Head of caudate nucleus (tissue), 42 donors: ENCODE measurements at regions of chr15 and their contacts with region 1.

Region 1: GRCh38 chr15:68550481-68551295 is 28.1 kb upstream of the CORO2B start:
- DNase-seq: peak; percentile 72 to 96 (median 90)

Region 2: GRCh38 chr15:68631601-68632051 is 80.9 kb after region 1 on chr15:
- intact Hi-C with region 1: no loop called
- DNase-seq: no peak

Region 3: GRCh38 chr15:68924866-68925560 is 374.3 kb after region 1 on chr15:
- intact Hi-C with region 1: loop called (anchors 5 kb)
- DNase-seq: peak; percentile 75 to 93 (median 87)